ENCODE measurements at regions of chr5 and their contacts with region 1.

Region 1: DNA sequence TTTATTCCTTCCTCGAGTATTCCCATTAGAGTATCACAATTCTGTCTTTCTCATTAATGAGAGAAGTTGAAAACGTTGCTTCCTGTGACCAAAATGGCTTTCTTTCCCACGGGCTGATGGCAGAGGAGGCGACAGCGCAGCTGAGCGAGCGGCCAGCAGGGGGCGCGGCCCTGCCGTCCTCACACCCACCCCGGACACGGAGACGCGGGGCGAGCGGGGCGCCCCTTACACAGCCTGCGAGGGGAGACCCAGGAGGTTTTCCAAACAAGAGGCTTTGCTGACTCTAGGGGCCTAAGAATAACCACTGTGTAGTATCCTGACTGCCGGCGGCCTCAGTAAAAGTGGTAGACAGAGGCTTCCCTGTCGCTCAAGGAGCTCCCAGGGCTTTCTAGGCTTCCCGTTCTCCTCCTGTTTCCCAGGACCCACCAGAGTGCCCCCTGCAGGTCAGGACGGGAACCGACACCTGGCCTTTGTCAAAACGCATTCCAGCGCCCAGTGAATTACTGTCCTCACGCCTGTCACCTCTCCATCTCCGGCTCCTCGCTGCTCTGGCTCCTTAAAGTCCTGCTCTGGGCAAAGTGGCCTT is 27.3 kb upstream of the FGF1 start:
- DNase-seq: peak; percentile 96
- H3K4me3 Mint-ChIP-seq: peak overlapping the region; percentile 80
- H3K27ac Mint-ChIP-seq: peak overlapping the region; percentile 63
- H3K4me1 Mint-ChIP-seq: peaks cover 23% of the 10 kb centered on the region
- H3K27me3 Mint-ChIP-seq: no peaks in the 10 kb centered on the region
- CTCF ChIP-seq: peak; percentile 99

Region 2: DNA sequence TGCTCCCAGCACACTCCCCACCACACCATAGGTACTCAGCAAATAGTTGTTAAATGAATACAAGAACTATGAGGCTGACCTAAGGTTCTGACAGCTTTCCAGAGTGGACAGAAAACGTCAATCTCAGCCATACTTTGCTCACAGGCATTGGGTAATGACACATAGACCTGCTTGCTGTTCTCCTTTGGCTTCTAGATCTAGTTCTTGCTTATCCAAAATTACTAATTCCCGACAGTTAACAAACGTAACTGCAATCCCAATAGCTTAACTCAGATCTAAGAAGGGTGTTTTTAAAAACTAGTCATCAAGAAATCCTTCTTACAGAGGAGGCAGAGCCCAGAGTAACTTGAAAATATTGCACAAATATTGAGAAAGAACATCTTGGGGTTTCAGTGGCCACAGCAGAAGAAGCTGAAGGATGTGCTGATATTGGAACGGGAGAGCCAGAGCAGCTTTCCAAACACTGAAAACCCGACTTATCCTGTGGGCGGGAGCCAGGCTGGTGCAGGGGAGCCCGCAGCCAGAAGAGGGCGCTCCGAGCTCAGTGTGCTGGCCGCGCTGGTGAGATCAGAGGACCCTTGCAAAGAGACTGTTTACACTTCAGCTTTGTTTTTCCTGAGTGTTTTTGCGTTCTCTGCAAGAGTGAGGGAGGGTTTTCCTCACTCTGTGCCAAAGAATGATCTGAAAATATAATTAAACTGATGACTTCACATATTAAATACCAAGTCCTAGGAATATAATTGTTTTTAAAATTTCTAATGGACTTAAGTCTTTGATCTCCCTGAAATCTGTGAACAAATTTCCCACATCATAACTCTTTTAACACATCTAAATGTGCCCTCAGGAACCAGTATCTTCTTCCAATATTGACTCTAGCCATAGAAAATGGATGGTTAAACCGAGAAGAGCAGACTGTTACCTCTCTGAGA is 57.6 kb before region 1 on chr5:
- CTCF ChIA-PET with region 1: interaction called, 22 read pairs
- intact Hi-C with region 1: no loop called
- DNase-seq: peak; percentile 90
- H3K4me3 Mint-ChIP-seq: no peak overlapping the region
- H3K27ac Mint-ChIP-seq: no peak overlapping the region
- H3K4me1 Mint-ChIP-seq: no peaks in the 10 kb centered on the region
- H3K27me3 Mint-ChIP-seq: peaks cover 38% of the 10 kb centered on the region
- CTCF ChIP-seq: peak; percentile 97

Region 3: DNA sequence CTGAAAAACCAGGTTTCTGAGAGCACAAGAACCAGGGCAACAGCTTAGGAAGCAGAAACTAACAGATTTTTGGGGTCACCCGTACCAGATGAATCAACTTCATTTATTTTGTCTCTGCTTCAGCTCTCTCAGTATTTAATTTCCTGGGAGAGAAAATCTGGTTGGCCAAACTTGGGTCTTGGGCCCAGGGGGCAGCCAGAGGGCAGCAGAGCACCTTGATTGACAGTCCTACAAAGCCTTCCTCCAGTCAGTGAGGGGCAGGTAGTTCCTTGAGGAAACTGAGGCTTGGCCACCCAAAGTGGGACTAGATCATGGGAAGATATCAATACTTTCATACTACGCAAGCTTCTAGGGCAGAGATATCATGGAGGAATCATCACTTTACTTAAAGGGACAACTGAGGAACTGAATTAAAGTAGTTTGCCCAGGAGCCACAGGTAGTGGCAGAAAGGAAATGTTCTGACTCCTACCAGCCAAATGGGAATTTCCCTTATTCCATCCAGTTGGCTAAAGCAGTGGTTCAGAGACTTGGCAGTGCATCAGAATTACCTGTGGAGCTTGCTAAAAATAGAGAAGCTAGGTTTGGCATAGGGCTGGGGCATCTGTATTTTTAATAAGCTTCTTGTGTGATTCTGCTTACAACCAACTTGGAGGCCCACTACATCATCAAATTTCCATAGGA is 35.5 kb after region 1 on chr5:
- CTCF ChIA-PET with region 1: interaction called, 17 read pairs
- intact Hi-C with region 1: loop called (anchors 2 kb)
- DNase-seq: peak; percentile 71
- H3K4me3 Mint-ChIP-seq: no peak overlapping the region
- H3K27ac Mint-ChIP-seq: peak overlapping the region; percentile 87
- H3K4me1 Mint-ChIP-seq: peaks cover 44% of the 10 kb centered on the region
- H3K27me3 Mint-ChIP-seq: no peaks in the 10 kb centered on the region
- CTCF ChIP-seq: peak; percentile 78

Region 4: DNA sequence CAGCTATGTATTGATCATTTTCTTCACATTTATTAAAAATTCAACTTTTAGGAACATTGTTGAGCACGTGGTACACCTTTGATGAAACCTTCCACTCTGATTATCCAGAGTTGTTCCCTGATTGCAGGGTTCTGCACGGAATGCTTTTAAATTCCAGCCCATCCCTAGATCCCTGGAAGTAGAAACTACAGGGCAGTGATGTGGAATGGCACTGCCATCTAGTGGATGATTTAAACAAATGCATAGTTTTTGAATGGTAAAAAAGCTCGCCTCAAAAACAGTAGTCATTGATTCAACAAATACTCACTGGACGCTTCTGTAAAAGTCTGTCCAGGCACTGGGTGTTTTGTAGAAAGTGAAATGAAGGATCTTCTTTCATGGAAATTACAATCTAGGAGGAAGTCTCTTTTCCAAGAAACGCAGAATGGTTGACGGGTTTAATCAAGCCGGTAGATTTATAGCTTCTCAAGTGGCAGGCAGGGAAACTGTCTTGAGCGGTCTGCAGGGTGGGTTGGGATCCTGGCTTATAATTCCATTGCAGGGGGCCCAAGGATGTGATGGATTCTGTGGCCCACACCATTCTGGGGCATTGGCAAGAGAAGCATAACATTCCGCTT is 175.4 kb after region 1 on chr5:
- CTCF ChIA-PET with region 1: interaction called, 56 read pairs
- intact Hi-C with region 1: loop called (anchors 1 kb)
- DNase-seq: peak; percentile 46
- H3K4me3 Mint-ChIP-seq: no peak overlapping the region
- H3K27ac Mint-ChIP-seq: no peak overlapping the region
- H3K4me1 Mint-ChIP-seq: peaks cover 33% of the 10 kb centered on the region
- H3K27me3 Mint-ChIP-seq: no peaks in the 10 kb centered on the region
- CTCF ChIP-seq: peak; percentile 52

Measured in Calu3 (cell line).